Heart right ventricle (tissue), 16 donors: ENCODE measurements at regions of chr5 and their contacts with region 1.

Region 1: GRCh38 chr5:170100066-170100943 is 5.4 kb upstream of the FOXI1 start:
- DNase-seq: peak; percentile 62 to 77
- ATAC-seq: peak in 7 of 8 donors; percentile 60 to 76 (median 68)
- H3K4me3 ChIP-seq: no peak overlapping the region
- H3K27ac ChIP-seq: no peak overlapping the region
- H3K4me1 ChIP-seq: peaks cover 0 to 37% (median 0%) of the 10 kb centered on the region in 9 donors
- H3K27me3 ChIP-seq: peaks cover 0 to 5% (median 0%) of the 10 kb centered on the region in 7 donors
- CTCF ChIP-seq: peak; percentile 37 to 76 (median 69)

Region 2: DNA sequence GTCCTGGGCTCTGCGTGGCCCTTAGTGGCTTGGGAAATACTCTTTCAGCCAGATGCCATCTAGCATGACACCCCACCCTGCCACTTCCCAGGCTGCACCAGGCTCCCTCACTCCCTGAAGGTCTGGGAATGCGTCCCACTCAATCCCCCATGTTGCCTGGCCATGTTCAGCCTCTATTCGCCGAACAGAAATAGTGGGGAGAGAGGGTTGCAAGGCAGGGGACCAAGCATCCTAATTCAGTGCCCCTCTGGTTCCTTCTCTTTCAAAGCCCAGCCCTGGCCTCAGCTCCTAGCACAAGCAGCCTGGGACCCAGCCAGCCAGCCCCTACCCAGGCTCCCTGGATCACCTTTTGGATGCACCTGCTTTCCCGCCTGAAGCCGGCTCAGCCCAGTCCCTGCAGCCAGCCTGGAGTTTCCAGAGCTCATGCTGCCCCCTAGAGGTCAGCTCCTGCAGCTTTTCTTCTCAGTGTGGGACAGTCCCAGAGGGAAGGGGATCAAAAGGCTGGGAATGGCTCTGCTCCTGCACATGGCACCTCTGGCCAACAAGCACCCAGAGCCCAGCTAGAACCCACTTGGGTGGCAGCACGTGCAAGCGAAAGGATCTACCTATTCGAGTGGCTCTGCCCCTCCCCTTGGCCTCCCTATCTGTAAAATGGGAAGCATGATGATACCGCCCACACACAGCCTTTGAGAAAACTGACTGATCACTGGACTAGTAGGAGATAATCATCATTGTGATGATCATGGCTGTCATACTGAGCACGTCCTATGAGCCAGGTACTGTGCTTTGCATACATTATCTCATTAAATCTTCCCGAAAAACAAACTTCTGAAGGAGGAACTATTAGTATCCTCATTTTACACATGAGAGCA is 83.7 kb after region 1 on chr5:
- intact Hi-C with region 1: loop called (anchors 1 to 5 kb)
- DNase-seq: peak; percentile 42 to 58
- ATAC-seq: peak; percentile 74 to 92 (median 84)
- H3K4me3 ChIP-seq: no peak overlapping the region
- H3K27ac ChIP-seq: no peak overlapping the region
- H3K4me1 ChIP-seq: no peaks in the 10 kb centered on the region
- H3K27me3 ChIP-seq: peaks cover 0 to 3% (median 0%) of the 10 kb centered on the region in 7 donors
- CTCF ChIP-seq: peak; percentile 45 to 84 (median 75)

Region 3: DNA sequence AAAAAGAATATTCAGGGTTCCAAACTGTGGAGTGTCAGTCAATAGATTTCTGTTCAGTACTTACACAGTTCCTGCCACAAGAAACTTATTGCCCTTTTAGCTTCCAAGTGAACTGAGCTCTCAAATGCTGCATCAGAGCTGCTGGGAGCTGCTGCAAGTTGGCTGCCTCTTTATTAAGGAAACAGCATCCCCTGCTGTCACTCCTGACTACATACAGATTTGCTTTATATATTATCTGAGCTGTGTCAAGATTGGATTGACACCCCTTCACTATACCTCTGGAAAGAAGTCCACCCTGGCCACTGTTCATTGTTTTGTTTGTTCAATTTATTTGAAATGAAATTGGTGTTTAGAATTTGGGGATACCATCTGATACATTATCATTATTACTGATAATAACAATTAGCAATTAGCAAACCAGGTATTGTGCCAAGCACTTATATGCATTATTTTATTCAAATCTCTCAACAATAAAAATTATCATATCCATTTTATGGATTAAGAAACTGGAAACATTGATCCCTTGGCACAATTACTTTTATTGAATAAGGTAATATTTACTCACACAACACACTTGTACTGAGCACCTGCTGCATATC is 116.1 kb after region 1 on chr5:
- intact Hi-C with region 1: loop called in 2 of 10 experiments (anchors 1 to 2 kb)
- DNase-seq: peak in 1 of 2 donors; percentile 23
- ATAC-seq: peak in 2 of 8 donors; percentile 41 to 55
- H3K4me3 ChIP-seq: no peak overlapping the region
- H3K27ac ChIP-seq: no peak overlapping the region
- H3K4me1 ChIP-seq: peaks cover 0 to 6% (median 0%) of the 10 kb centered on the region in 9 donors
- H3K27me3 ChIP-seq: peaks cover 0 to 9% (median 0%) of the 10 kb centered on the region in 7 donors
- CTCF ChIP-seq: peak in 8 of 9 donors; percentile 18 to 61 (median 55)

Region 4: DNA sequence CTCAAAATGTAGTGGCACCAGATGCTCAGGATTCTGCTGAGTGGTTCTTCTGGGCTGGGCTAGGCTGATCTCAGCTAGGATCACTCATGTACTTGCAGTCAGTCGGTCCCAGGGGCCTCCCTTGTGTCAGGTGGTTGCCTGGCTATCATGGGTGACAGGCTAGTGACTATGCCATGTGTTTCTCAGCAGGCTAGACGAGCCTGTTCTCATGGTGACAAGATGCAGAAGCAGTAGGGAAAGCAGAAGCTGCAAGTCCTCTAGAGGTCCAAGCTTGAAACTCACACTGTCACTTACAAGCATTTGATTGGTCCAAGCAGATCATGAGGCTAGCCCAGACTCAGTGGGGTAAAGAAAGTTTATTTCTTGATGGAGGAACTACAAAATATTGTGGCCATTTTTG is 304.1 kb after region 1 on chr5:
- intact Hi-C with region 1: loop called in 1 of 10 experiments (anchors 10 kb)
- DNase-seq: no peak
- ATAC-seq: peak in 4 of 8 donors; percentile 16 to 34 (median 32)
- H3K4me3 ChIP-seq: no peak overlapping the region
- H3K27ac ChIP-seq: no peak overlapping the region
- H3K4me1 ChIP-seq: peaks cover 0 to 19% (median 0%) of the 10 kb centered on the region in 9 donors
- H3K27me3 ChIP-seq: peaks cover 0 to 3% (median 0%) of the 10 kb centered on the region in 7 donors
- CTCF ChIP-seq: no peak

Region 5: DNA sequence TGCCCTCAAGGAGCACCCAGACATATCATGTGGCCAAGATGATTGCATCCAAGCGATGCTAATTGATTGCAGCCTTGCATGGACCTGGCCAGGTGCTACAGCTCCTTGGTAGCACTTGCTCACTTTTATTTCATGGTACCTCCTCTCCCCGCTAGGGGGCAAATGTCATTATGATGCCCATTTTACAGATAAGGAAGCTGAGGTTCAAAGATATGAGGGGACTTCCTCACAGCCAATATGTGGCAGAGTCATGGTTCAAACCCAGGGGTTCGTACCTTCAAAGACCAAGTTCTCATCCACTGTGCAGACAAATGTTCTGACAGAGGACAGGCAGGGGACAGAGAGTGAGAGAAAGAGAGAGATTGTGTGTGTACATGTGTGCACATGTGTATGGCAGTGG is 310.8 kb after region 1 on chr5:
- intact Hi-C with region 1: loop called in 4 of 10 experiments (anchors 5 to 10 kb)
- DNase-seq: no peak
- ATAC-seq: no peak
- H3K4me3 ChIP-seq: no peak overlapping the region
- H3K27ac ChIP-seq: no peak overlapping the region
- H3K4me1 ChIP-seq: peaks cover 0 to 10% (median 0%) of the 10 kb centered on the region in 9 donors
- H3K27me3 ChIP-seq: peaks cover 0 to 3% (median 0%) of the 10 kb centered on the region in 7 donors
- CTCF ChIP-seq: peak in 1 of 9 donors; percentile 18